ENCODE measurements at regions of chrX and their contacts with region 1.

Region 1: DNA sequence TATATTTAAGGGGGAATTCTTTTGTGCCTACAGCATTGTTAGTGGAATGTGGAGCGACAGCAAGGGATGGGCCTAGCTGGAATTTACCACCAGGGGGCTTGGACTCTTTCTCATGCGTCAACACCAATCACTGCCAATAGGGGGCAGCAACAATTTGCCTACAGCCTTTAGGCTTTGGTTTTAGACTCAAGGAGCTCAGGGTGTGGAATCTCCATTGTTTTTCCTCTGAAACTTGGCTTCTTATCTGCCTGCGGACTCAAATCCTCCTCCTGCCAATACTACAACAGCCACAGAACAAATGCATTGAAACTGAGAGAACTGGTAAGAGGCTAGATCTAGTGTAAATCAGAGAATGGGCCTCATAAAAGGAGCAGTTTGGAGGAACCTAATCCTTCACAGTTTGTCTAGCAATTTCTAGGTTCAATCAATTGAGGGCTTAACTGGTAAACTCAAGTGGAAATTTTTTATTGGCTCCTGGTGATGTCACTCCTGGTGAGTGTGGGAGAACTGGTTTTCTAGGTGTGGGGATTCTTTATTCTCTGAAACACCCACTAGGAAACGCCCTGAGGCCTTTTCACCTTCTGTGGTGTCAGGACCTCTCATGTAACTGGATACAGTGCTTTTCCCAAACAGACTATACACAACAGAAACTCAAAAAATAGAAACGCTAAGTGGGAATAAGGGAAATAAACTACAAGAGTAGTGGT is 27.9 kb upstream of the TMSB4X start:
- DNase-seq: peak; percentile 83
- ATAC-seq: peak; percentile 31
- H3K4me3 ChIP-seq: peak overlapping the region in 1 of 5 experiments; percentile 38
- H3K4me3 Mint-ChIP-seq: peak overlapping the region; percentile 74
- H3K27ac ChIP-seq: peak overlapping the region; percentile 49 to 88
- H3K27ac Mint-ChIP-seq: peak overlapping the region; percentile 91
- H3K4me1 ChIP-seq: peaks cover 56 to 57% of the 10 kb centered on the region in 2 donors
- H3K4me1 Mint-ChIP-seq: peaks cover 53% of the 10 kb centered on the region
- H3K27me3 ChIP-seq: no peaks in the 10 kb centered on the region
- H3K27me3 Mint-ChIP-seq: no peaks in the 10 kb centered on the region
- CTCF ChIP-seq: peak; percentile 90

Region 2: DNA sequence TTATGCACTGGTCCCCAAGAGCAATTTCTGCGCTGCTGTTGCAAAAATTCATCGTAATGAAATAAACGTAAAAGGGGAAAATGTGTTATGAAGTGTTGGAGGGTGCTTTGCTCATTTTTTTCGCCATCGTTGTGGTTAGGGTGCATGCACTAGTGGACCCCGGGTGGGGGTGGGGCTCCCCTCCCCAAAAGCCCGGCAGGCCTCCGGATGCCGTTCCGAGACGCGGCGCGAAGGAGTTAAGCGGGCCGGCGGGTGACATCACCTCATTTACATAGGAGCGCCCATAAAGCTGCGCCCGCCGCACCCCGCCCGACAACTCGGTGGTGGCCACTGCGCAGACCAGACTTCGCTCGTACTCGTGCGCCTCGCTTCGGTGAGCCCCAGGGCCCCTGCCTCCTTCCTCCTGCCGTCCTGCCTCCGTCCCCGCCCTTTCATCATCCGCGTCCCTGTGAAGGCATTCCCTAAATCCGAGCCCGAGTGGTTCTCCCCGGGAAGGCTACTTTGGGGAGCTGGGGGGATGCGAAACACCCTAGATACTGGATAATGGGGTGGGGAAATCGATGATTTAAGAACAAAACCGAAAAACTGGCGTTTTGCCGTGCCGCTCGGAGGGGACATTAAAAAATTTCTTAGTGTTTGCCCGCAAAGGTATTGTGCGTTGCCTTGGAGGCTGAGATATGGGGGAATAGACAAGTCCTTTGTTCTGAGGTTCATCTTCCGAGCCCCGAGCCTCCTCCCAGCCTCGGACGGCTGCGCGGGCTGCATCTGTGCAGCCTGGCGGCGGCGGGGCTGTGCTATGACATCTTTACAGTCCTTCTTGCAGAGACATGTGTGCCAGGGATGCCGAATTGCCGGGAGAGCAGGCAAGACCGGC is 28.0 kb after region 1 on chrX and contains the start of gene TMSB4X:
- CTCF ChIA-PET with region 1: interaction called, 214 read pairs
- POLR2A ChIA-PET with region 1: interaction called, 130 read pairs
- intact Hi-C with region 1: loop called (anchors 1 kb)
- DNase-seq: peak; percentile 89
- ATAC-seq: peak; percentile 59
- H3K4me3 ChIP-seq: peak within 1 kb of the TSS; percentile 85 to 93 (median 89)
- H3K4me3 Mint-ChIP-seq: peak within 1 kb of the TSS; percentile 99
- H3K27ac ChIP-seq: peak within 1 kb of the TSS; percentile 84 to 86
- H3K27ac Mint-ChIP-seq: peak within 1 kb of the TSS; percentile 98
- H3K4me1 ChIP-seq: peaks cover 49 to 52% of the 10 kb centered on the region in 2 donors
- H3K4me1 Mint-ChIP-seq: peaks cover 60% of the 10 kb centered on the region
- H3K27me3 ChIP-seq: no peaks in the 10 kb centered on the region
- H3K27me3 Mint-ChIP-seq: no peaks in the 10 kb centered on the region
- CTCF ChIP-seq: no peak
- total RNA-seq, gene TMSB4X: 2,468 and 2,550 TPM in 2 replicates

Region 3: DNA sequence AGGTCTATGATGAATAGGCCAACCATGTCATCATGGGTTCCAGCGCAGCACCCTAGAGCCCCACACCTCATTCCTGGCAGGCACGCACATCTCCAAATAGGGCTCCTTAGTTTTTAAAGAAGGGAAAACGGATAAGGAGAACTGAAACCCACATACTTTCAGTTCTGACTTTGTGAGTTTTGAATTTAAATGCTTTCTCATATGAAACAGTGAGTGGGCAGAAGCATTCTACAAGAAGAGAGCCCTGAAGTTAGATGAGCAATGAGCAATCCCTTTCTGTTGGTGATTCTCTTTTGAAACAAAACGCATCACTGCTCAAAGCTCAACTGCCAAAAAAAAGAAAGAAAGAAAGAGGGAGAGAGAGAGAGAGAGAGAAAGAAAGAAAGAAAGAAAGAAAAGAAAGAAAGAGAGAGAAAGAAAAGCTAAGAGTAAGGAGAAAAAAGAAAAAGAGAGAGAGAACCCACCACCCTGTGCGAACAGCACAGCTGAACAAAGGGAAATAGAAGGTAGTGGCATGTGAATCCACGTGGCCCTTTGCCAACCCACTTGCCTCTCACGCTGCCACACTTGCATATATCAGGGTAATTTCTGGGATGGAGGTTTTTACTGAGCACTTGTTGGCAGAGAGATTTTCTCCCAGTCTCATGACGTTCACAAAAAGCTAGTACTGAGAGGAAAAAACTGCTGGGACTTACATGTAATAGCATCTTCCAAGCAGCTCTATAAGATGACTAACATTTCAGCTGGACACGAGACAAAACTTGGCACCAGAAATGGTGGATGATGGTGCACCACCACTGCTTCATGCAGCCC is 58.9 kb after region 1 on chrX:
- CTCF ChIA-PET with region 1: interaction called, 15 read pairs
- POLR2A ChIA-PET with region 1: no interaction called
- intact Hi-C with region 1: no loop called
- DNase-seq: peak; percentile 59
- ATAC-seq: peak; percentile 66
- H3K4me3 ChIP-seq: peak overlapping the region in 2 of 5 experiments; percentile 1 to 36
- H3K4me3 Mint-ChIP-seq: peak overlapping the region; percentile 82
- H3K27ac ChIP-seq: peak overlapping the region; percentile 51 to 52
- H3K27ac Mint-ChIP-seq: peak overlapping the region; percentile 89
- H3K4me1 ChIP-seq: peaks cover 82 to 85% of the 10 kb centered on the region in 2 donors
- H3K4me1 Mint-ChIP-seq: peaks cover 77% of the 10 kb centered on the region
- H3K27me3 ChIP-seq: peaks cover 0 to 5% (median 0%) of the 10 kb centered on the region in 4 experiments
- H3K27me3 Mint-ChIP-seq: no peaks in the 10 kb centered on the region
- CTCF ChIP-seq: no peak

Region 4: DNA sequence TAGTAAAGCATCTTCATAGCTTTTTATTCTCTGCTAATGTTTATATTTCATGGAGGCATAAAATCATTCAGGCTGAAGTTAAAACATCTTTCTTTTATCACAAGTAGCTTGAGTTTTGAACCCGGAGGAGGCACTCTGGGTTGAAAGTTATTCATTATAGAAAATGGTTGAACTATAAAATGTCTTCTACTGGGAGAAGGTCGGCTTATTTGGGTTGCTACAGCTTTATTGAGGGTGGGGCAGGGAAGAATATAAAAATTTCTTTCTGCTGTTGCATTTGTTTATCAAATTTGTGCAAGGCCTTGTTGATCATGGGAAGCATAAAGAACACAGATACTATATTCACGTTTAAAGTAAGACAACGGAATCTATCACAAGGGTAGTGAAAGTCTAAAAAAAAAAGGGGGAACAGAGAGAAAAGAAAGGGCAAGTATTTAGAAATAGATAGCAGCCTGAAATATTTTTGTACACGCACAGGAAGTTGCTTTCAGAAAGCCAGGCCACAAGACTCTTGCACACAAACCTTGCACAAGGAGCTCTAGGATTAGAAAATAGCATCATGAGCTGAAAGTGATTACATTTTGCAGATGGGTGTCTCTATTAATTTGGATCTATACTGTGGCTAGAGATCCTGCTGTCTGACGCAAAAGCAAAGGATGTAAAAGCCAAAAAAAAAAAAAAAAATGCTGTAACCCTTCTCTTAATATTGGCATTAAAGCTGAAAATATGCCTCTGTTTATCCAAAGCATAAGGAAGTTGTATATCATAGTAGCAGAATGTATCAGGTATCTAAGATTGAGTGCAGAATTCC is 134.6 kb after region 1 on chrX:
- CTCF ChIA-PET with region 1: interaction called, 173 read pairs
- POLR2A ChIA-PET with region 1: interaction called, 4 read pairs
- intact Hi-C with region 1: no loop called
- DNase-seq: peak; percentile 63
- ATAC-seq: peak; percentile 54
- H3K4me3 ChIP-seq: peak overlapping the region in 2 of 5 experiments; percentile 9 to 29
- H3K4me3 Mint-ChIP-seq: peak overlapping the region; percentile 68
- H3K27ac ChIP-seq: peak overlapping the region; percentile 98
- H3K27ac Mint-ChIP-seq: peak overlapping the region; percentile 95
- H3K4me1 ChIP-seq: peaks cover 96 to 98% of the 10 kb centered on the region in 2 donors
- H3K4me1 Mint-ChIP-seq: peaks cover 83% of the 10 kb centered on the region
- H3K27me3 ChIP-seq: no peaks in the 10 kb centered on the region
- H3K27me3 Mint-ChIP-seq: no peaks in the 10 kb centered on the region
- CTCF ChIP-seq: no peak

Region 5: DNA sequence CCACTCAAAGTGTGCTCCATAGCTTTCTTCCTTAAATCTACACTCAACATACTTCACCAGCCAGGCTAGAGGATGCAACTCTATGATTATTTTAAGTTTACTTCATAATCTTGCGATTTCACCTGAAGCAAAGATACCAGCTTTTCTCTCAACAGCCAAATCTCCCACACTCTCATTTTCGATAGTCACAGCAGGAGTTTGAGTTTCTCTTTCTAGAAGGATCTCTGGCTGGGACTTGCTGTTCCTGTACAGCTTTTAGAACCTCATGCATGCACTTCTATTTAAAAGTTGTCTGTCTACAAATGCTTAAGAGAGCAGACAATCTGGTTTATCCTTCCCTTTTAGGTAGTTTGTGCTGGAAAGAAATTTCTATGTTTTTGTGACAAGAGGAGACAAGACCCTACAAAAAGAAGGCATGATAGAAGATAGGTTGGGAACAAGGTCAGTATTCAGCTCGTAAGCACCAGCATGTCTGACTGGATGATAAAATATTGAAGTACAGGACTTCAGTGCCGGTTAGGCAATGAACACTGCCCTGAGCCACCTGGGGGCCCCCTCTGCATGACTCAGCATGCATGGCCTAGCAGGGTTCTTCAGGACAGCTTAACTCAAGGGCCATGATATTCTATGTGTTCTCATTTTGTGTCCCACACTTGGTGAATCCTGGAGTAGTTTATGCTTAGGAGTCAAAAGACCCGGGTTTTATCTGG is 307.2 kb after region 1 on chrX:
- CTCF ChIA-PET with region 1: interaction called, 15 read pairs
- POLR2A ChIA-PET with region 1: no interaction called
- intact Hi-C with region 1: loop called (anchors 5 kb)
- DNase-seq: peak; percentile 23
- ATAC-seq: no peak
- H3K4me3 ChIP-seq: no peak overlapping the region
- H3K4me3 Mint-ChIP-seq: peak overlapping the region; percentile 40
- H3K27ac ChIP-seq: peak overlapping the region; percentile 16 to 38
- H3K27ac Mint-ChIP-seq: peak overlapping the region; percentile 54
- H3K4me1 ChIP-seq: peaks cover 54 to 66% of the 10 kb centered on the region in 2 donors
- H3K4me1 Mint-ChIP-seq: peaks cover 64% of the 10 kb centered on the region
- H3K27me3 ChIP-seq: no peaks in the 10 kb centered on the region
- H3K27me3 Mint-ChIP-seq: no peaks in the 10 kb centered on the region
- CTCF ChIP-seq: no peak

Region 6: DNA sequence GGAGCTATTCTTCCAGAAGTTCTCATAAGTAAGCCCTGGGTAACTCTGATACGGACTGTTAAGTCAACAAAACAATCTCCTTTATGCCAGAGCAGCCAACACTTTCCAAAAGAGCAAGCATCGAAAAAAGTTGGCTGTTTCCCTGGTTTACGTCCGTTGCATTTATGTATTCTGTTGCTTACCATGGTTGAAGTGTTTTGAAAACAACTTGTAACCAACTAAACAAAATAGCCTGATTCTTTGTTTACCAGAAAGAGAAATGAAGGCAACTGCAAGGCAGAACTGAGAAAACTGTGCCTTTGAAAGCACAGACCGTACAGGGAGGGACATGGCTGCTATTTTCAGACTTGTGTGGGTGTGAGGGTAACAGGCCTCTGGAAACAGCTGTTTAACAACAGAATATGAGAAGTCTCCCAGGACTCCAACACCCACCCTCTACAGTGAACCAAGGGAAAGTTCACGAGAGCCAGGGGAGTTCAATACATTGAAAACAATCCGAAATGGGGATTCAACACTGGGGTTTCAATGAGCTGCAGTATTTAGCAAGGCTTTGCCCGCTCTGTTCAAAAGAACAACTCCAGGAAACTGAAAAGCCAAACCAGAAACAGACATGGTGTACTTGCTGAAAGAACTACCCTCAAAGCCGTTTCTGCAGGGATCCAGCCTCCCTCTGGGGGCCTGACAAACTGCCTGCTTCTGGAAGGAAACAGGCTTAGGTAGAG is 526.6 kb after region 1 on chrX:
- CTCF ChIA-PET with region 1: interaction called, 11 read pairs
- POLR2A ChIA-PET with region 1: no interaction called
- intact Hi-C with region 1: no loop called
- DNase-seq: peak; percentile 55
- ATAC-seq: peak; percentile 77
- H3K4me3 ChIP-seq: peak overlapping the region; percentile 5 to 54 (median 34)
- H3K4me3 Mint-ChIP-seq: peak overlapping the region; percentile 87
- H3K27ac ChIP-seq: peak overlapping the region; percentile 91 to 97
- H3K27ac Mint-ChIP-seq: peak overlapping the region; percentile 99
- H3K4me1 ChIP-seq: peaks cover 46 to 53% of the 10 kb centered on the region in 2 donors
- H3K4me1 Mint-ChIP-seq: peaks cover 58% of the 10 kb centered on the region
- H3K27me3 ChIP-seq: no peaks in the 10 kb centered on the region
- H3K27me3 Mint-ChIP-seq: no peaks in the 10 kb centered on the region
- CTCF ChIP-seq: no peak